CD4-positive, alpha-beta memory T cell (primary cell): ENCODE measurements at regions of chr22 and their contacts with region 1.

Region 1: DNA sequence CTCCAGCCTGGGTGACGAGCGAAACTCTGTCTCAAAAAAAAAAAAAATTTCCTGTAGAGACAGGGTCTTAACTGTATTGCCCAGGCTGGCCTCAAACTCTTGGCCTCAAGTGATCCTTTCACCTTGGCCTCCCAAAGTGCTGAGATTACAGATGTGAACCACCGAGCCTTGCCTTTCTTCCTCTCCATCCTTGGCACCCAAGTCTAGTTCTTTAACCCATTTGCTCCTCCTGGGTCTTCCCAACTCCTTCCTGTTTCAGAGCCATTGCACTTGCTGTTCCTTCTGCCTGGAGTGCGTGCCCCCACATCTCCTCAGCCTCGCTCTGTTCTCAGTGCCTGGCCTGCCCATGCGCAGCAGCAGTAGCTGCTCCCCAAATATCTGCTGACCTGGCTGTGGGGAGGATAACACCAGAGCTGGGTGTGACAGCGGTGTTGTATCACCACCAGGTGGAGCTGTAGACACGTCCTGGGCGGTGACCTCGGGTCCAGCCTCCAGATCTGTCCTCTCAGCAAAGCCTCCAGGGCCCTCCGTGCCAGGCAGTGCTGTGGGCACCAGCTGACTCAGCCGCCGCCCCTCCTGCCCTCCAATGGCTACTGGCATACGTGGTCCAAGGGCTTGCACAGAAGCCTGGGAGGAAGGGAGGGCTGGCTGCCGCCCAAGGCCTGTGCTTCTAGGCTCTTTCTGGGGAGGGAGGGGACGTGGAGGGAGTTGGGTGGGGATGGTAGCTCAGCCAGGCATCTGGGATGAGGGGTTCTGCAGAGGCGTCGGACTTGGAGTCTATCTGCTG is 22.0 kb downstream of the TEF start:
- DNase-seq: peak; percentile 81 to 84 (median 84)
- H3K4me3 ChIP-seq: no peak overlapping the region
- H3K4me3 Mint-ChIP-seq: no peak overlapping the region
- H3K27ac ChIP-seq: no peak overlapping the region
- H3K27ac Mint-ChIP-seq: peak overlapping the region; percentile 7 to 89 (median 67)
- H3K4me1 ChIP-seq: peaks cover 12% of the 10 kb centered on the region
- H3K4me1 Mint-ChIP-seq: peaks cover 3 to 7% (median 6%) of the 10 kb centered on the region in 4 donors
- H3K27me3 ChIP-seq: no peaks in the 10 kb centered on the region
- H3K27me3 Mint-ChIP-seq: no peaks in the 10 kb centered on the region

Region 2: DNA sequence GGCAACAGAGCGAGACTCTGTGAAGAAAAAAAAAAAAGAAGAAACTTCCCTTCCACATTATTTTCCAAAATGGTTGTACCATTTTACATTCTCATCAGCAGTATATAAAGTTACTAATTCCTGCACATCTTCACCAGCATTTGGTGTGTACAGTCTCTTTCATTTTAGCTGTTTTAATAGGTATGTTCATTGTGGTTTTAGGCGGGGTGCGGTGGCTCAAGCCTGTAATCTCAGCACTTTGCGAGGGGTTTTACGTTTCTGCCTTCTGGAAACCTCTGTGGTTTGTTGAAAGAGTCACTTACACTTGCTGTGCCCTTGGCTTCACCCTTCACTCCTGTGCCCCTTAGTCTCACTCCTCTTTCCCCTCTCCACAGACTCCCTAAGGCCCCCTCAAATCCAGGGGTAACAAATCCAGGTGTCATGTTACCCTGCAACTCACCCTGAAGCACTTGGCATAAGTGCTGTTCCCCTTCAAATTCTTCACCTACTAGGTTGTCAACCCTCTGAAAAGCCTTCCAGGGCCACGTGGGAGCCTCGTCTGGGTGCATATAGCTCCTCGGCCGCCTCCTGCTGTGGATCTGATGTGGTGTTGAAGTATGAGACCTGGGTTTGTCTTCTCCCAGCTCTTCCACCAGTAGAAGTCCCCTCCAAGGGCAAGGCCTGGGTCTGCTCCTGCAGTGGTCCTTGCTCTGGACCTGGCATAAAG is 22.1 kb after region 1 on chr22:
- CTCF ChIA-PET with region 1: interaction called, 10 read pairs
- POLR2A ChIA-PET with region 1: no interaction called
- intact Hi-C with region 1: no loop called
- DNase-seq: peak; percentile 26 to 65 (median 41)
- H3K4me3 ChIP-seq: no peak overlapping the region
- H3K4me3 Mint-ChIP-seq: peak overlapping the region in 6 of 8 donors; percentile 10 to 74 (median 40)
- H3K27ac ChIP-seq: peak overlapping the region; percentile 35
- H3K27ac Mint-ChIP-seq: peak overlapping the region; percentile 73 to 95 (median 92)
- H3K4me1 ChIP-seq: peaks cover 17% of the 10 kb centered on the region
- H3K4me1 Mint-ChIP-seq: peaks cover 10 to 17% (median 13%) of the 10 kb centered on the region in 4 donors
- H3K27me3 ChIP-seq: no peaks in the 10 kb centered on the region
- H3K27me3 Mint-ChIP-seq: no peaks in the 10 kb centered on the region

Region 3: GRCh38 chr22:41458161-41458728 is 54.5 kb after region 1 on chr22:
- CTCF ChIA-PET with region 1: interaction called, 15 read pairs
- POLR2A ChIA-PET with region 1: no interaction called
- intact Hi-C with region 1: no loop called
- DNase-seq: no peak
- H3K4me3 ChIP-seq: no peak overlapping the region
- H3K4me3 Mint-ChIP-seq: no peak overlapping the region
- H3K27ac ChIP-seq: no peak overlapping the region
- H3K27ac Mint-ChIP-seq: peak overlapping the region in 4 of 7 donors; percentile 10 to 58 (median 56)
- H3K4me1 ChIP-seq: no peaks in the 10 kb centered on the region
- H3K4me1 Mint-ChIP-seq: peaks cover 0 to 3% (median under 1%) of the 10 kb centered on the region in 4 donors
- H3K27me3 ChIP-seq: no peaks in the 10 kb centered on the region
- H3K27me3 Mint-ChIP-seq: no peaks in the 10 kb centered on the region

Region 4: GRCh38 chr22:41479671-41480396 is 76.1 kb after region 1 on chr22:
- CTCF ChIA-PET with region 1: interaction called, 13 read pairs
- POLR2A ChIA-PET with region 1: no interaction called
- intact Hi-C with region 1: no loop called
- DNase-seq: no peak
- H3K4me3 ChIP-seq: no peak overlapping the region
- H3K4me3 Mint-ChIP-seq: no peak overlapping the region
- H3K27ac ChIP-seq: no peak overlapping the region
- H3K27ac Mint-ChIP-seq: peak overlapping the region in 2 of 7 donors; percentile 9 to 68
- H3K4me1 ChIP-seq: peaks cover 6% of the 10 kb centered on the region
- H3K4me1 Mint-ChIP-seq: peaks cover 15 to 46% (median 28%) of the 10 kb centered on the region in 4 donors
- H3K27me3 ChIP-seq: no peaks in the 10 kb centered on the region
- H3K27me3 Mint-ChIP-seq: no peaks in the 10 kb centered on the region

Region 5: GRCh38 chr22:41517172-41518047 is 113.7 kb after region 1 on chr22:
- CTCF ChIA-PET with region 1: interaction called, 136 read pairs
- POLR2A ChIA-PET with region 1: interaction called, 7 read pairs
- intact Hi-C with region 1: loop called (anchors 1 kb)
- DNase-seq: peak in 3 of 5 donors; percentile 18 to 36 (median 22)
- H3K4me3 ChIP-seq: no peak overlapping the region
- H3K4me3 Mint-ChIP-seq: no peak overlapping the region
- H3K27ac ChIP-seq: no peak overlapping the region
- H3K27ac Mint-ChIP-seq: peak overlapping the region in 1 of 7 donors; percentile 29
- H3K4me1 ChIP-seq: no peaks in the 10 kb centered on the region
- H3K4me1 Mint-ChIP-seq: peaks cover 0 to 1% (median 0%) of the 10 kb centered on the region in 4 donors
- H3K27me3 ChIP-seq: no peaks in the 10 kb centered on the region
- H3K27me3 Mint-ChIP-seq: no peaks in the 10 kb centered on the region

Region 6: DNA sequence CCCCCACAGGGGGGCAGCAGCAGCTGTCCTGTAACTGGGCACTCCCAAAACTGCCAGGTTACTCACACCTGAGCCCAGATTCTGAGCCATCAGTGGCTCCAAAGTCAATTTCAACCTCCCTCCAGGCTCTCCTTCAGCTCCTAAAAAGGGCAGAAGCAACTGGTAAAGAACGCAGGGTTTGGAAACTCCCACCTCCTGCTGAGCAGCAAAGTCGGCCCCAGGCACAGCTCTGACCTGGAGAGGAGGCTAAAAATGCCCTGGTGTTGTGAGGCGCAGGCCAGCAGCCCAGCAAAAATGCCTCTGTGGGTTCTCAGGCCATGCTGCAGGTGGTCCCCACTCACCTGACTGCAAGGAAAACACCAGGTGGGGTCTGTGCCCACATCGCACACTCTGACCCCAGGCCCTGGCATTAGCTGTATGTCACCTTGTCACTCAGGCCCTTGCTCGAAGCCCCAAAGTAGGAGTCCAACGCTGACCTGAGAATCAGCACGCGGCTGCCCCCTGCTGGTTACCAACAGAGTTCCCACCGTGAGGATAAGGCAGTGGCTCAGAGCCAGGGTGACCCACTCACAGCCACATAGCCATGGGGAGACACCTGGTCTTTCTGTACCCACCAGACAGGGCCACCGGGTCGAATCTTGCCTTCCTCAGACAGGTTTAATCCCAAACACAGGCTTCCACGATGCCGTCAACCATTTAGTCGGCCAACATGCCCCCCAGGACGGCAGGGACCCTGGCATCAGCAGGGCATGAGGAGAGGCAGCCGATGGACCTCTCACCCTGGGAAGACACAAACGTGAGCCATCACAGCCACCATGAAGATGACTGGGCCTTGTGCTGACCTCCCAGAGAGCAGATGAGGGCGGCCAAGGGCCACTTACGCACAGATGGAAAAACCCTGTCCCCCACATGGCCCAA is 129.4 kb after region 1 on chr22:
- CTCF ChIA-PET with region 1: interaction called, 124 read pairs
- POLR2A ChIA-PET with region 1: interaction called, 34 read pairs
- intact Hi-C with region 1: no loop called
- DNase-seq: peak; percentile 50 to 61 (median 54)
- H3K4me3 ChIP-seq: no peak overlapping the region
- H3K4me3 Mint-ChIP-seq: peak overlapping the region in 1 of 8 donors; percentile 31
- H3K27ac ChIP-seq: no peak overlapping the region
- H3K27ac Mint-ChIP-seq: peak overlapping the region in 5 of 7 donors; percentile 12 to 62 (median 35)
- H3K4me1 ChIP-seq: no peaks in the 10 kb centered on the region
- H3K4me1 Mint-ChIP-seq: peaks cover 2 to 5% (median 4%) of the 10 kb centered on the region in 4 donors
- H3K27me3 ChIP-seq: no peaks in the 10 kb centered on the region
- H3K27me3 Mint-ChIP-seq: no peaks in the 10 kb centered on the region